ENCODE measurements at regions of chr1 and their contacts with region 1.

Region 1: DNA sequence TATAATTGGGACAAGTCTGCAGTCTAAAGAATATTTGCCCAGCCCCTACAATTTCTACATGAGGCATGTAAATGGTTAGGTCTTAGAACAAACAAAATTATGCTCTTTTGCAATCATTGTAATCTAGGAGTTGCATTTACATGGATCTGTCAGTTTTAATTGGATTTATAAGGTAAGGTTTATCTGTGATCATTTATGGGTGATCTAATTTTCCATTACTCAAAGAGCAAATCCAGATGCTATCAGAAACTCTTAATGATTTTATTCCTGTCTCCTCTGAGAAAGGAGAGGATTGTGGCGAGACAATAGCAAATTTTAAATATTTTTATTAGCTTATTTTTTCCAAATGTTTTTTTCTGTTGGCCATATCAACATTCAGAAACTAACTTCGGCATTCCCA is 14.1 kb upstream of the NEGR1 start:
- DNase-seq: no peak
- ATAC-seq: no peak
- H3K4me3 ChIP-seq: no peak overlapping the region
- H3K27ac ChIP-seq: no peak overlapping the region
- H3K4me1 ChIP-seq: no peaks in the 10 kb centered on the region
- H3K27me3 ChIP-seq: no peaks in the 10 kb centered on the region
- CTCF ChIP-seq: no peak

Region 2: DNA sequence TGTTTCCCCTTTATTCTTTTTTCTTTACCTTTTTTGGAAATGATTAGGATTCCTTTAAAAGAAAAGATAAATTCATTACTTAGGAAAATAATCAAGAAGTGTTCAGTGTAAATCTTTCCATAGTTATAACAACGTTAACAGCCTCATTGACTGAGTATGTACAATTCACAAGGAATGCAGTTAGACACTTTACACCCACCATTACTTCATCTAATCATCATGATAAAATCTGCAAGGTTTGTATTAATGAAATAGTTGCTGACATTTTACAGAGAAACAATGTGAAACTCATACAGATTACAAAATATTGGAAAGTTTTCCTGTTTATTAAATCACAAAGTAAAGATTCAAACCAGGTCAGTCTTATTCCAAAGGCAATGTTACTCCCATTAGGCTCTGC is 45.2 kb after region 1 on chr1:
- intact Hi-C with region 1: loop called in 3 of 10 experiments (anchors 2 kb)
- DNase-seq: no peak
- ATAC-seq: no peak
- H3K4me3 ChIP-seq: no peak overlapping the region
- H3K27ac ChIP-seq: no peak overlapping the region
- H3K4me1 ChIP-seq: no peaks in the 10 kb centered on the region
- H3K27me3 ChIP-seq: no peaks in the 10 kb centered on the region
- CTCF ChIP-seq: no peak

Region 3: DNA sequence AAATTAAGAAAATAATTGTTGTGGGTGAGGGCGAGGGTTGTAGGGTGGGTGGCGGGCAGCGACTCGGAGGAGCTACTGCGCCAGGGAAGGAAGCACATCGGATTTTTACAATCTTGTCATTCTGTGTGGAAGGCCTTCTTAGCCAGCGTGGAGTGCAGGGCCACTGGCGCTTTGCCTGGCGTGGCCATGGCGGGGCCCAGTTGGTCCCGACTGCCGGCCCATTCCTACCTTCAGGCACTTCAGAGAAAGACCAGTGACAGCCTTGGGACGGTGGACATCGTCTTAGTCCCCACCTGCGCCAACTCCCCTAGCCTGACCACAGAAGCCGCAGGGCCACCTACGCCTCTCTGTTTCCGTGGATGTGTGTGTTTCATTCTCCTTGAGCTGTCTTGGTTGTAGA is 122.7 kb after region 1 on chr1:
- intact Hi-C with region 1: no loop called
- DNase-seq: no peak
- ATAC-seq: no peak
- H3K4me3 ChIP-seq: no peak overlapping the region
- H3K27ac ChIP-seq: no peak overlapping the region
- H3K4me1 ChIP-seq: no peaks in the 10 kb centered on the region
- H3K27me3 ChIP-seq: no peaks in the 10 kb centered on the region
- CTCF ChIP-seq: no peak